Activated naive CD4-positive, alpha-beta T cell treated with anti-CD3 and anti-CD28 coated beads for 36 hours (primary cell): ENCODE measurements at regions of chr11 and their contacts with region 1.

Region 1: GRCh38 chr11:110711776-110712658 is at the start of gene ARHGAP20:
- DNase-seq: peak; percentile 59
- H3K4me3 Mint-ChIP-seq: peak within 1 kb of the TSS; percentile 70
- H3K27ac Mint-ChIP-seq: no peak within 1 kb of the TSS
- H3K4me1 Mint-ChIP-seq: peaks cover 14% of the 10 kb centered on the region
- H3K27me3 Mint-ChIP-seq: peaks cover 48% of the 10 kb centered on the region
- total RNA-seq, gene ARHGAP20: 0.19 to 0.22 TPM

Region 2: GRCh38 chr11:109106201-109106906 is 1605.7 kb before region 1 on chr11:
- CTCF ChIA-PET with region 1: no interaction called
- intact Hi-C with region 1: no loop called
- DNase-seq: no peak
- H3K4me3 Mint-ChIP-seq: no peak overlapping the region
- H3K27ac Mint-ChIP-seq: no peak overlapping the region
- H3K4me1 Mint-ChIP-seq: no peaks in the 10 kb centered on the region
- H3K27me3 Mint-ChIP-seq: peaks cover 17% of the 10 kb centered on the region

Region 3: DNA sequence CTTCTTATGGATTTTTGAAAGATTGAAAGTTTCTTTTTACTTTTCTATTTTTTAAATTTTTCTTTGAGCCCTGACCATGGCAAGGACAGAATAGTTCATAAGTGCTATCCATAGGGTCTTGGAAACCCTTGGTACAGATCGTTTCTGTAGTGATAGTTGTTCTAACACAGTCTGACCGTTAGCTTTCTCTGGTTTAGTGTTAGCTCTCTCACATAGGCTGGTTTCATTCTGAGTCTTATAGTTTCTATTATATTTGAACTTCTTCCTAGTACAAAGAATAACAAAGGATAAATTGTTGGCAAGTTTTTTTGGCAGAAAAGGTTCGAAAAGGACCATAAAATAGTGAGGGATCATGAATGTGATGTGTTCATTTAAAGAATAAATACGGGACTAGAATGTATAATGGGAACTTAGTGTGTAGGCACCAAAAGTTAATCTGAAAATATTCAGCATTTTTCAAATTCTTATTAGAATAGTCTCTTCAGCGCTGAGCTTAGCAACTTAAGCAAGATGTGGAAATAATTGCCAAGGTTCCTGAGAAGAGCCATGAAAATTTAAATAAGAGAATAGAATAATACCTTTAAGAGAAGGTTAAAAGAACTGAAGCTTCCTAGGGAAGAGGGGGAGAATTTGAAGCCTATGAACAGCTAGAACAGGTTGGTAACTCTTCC is 258.2 kb before region 1 on chr11:
- CTCF ChIA-PET with region 1: no interaction called
- intact Hi-C with region 1: loop called (anchors 5 kb)
- DNase-seq: no peak
- H3K4me3 Mint-ChIP-seq: no peak overlapping the region
- H3K27ac Mint-ChIP-seq: no peak overlapping the region
- H3K4me1 Mint-ChIP-seq: peaks cover 31% of the 10 kb centered on the region
- H3K27me3 Mint-ChIP-seq: no peaks in the 10 kb centered on the region